ENCODE measurements at regions of chr2 and their contacts with region 1.

Region 1: GRCh38 chr2:216619411-216620393 is 13.5 kb upstream of the IGFBP2 start:
- DNase-seq: no peak
- H3K4me3 ChIP-seq: no peak overlapping the region
- H3K27ac ChIP-seq: peak overlapping the region in 1 of 2 donors; percentile 79
- H3K4me1 ChIP-seq: peaks cover 0 to 47% (median 17%) of the 10 kb centered on the region in 4 donors
- H3K27me3 ChIP-seq: no peaks in the 10 kb centered on the region
- CTCF ChIP-seq: no peak

Region 2: GRCh38 chr2:216535454-216535995 is 84.2 kb before region 1 on chr2:
- intact Hi-C with region 1: no loop called
- DNase-seq: peak; percentile 69 to 86
- H3K4me3 ChIP-seq: no peak overlapping the region
- H3K27ac ChIP-seq: peak overlapping the region; percentile 74 to 79
- H3K4me1 ChIP-seq: peaks cover 6 to 67% (median 33%) of the 10 kb centered on the region in 4 donors
- H3K27me3 ChIP-seq: no peaks in the 10 kb centered on the region
- CTCF ChIP-seq: no peak

Region 3: GRCh38 chr2:216583147-216583546 is 36.6 kb before region 1 on chr2:
- intact Hi-C with region 1: loop called (anchors 5 kb)
- DNase-seq: no peak
- H3K4me3 ChIP-seq: no peak overlapping the region
- H3K27ac ChIP-seq: no peak overlapping the region
- H3K4me1 ChIP-seq: peaks cover 0 to 4% (median 0%) of the 10 kb centered on the region in 4 donors
- H3K27me3 ChIP-seq: no peaks in the 10 kb centered on the region
- CTCF ChIP-seq: no peak

Measured in tibial artery (tissue), 4 donors.